ENCODE measurements at regions of chr1 and their contacts with region 1.

Region 1: DNA sequence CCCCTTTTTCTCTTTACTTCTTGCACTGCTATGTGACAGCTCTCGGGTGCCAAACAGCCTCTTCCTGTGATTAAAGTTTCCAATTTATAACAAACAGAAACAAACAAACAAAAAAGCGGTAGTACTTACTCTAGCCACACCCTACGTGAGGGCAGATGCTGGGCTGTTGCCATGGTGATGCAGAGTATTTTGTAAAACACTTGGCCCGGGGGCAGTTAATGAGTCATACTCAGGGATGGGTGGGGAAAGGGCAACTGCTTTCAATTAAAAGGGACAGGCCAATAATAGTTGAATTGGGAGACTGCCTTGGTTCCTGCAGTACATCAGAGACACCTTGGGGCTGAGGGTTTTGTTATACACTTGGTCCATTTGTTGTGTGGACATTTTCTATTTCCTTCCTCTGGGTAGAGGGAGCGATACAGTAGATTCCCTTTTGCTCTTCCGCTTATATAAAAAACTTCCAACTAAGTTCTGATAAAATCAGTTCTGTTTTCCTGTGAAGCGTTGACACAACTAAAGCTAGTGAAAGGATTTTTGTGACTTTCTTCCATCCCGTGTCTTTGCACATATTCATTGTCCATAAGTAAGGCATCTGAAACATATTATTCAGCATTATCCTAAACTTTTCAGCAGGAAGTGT is 36.5 kb upstream of the THEM4 start:
- DNase-seq: peak; percentile 100
- H3K4me3 Mint-ChIP-seq: peak overlapping the region; percentile 16
- H3K27ac Mint-ChIP-seq: peak overlapping the region; percentile 99
- H3K4me1 Mint-ChIP-seq: peaks cover 33% of the 10 kb centered on the region
- H3K27me3 Mint-ChIP-seq: no peaks in the 10 kb centered on the region
- CTCF ChIP-seq: no peak

Region 2: DNA sequence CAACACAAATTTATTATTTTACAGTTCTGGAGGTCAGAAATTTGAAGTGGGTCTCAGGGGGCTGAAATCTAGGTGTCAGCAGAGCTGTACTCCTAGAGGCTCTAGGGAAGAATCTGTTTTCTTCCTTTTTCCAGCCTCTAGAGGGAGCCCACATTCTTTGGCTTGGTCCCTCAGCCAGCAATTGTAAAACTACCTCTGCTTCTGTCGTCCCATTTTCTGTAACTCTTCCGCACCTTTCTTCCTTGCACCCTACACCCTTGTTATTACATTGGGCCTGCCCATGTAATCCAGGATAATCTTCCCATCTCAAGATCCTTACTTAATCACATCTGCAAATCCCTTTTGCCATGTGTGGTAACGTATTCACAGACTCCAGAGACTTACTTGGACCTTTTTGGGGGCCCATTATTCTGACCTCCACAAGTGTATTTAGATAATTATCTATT is 11.8 kb before region 1 on chr1:
- CTCF ChIA-PET with region 1: interaction called, 10 read pairs
- POLR2A ChIA-PET with region 1: interaction called, 31 read pairs
- intact Hi-C with region 1: no loop called
- DNase-seq: peak; percentile 82
- H3K4me3 Mint-ChIP-seq: no peak overlapping the region
- H3K27ac Mint-ChIP-seq: no peak overlapping the region
- H3K4me1 Mint-ChIP-seq: peaks cover 11% of the 10 kb centered on the region
- H3K27me3 Mint-ChIP-seq: no peaks in the 10 kb centered on the region
- CTCF ChIP-seq: peak; percentile 96

Region 3: GRCh38 chr1:151958959-151959358 is 13.1 kb after region 1 on chr1:
- CTCF ChIA-PET with region 1: interaction called, 5 read pairs
- POLR2A ChIA-PET with region 1: interaction called, 13 read pairs
- intact Hi-C with region 1: no loop called
- DNase-seq: peak; percentile 79
- H3K4me3 Mint-ChIP-seq: no peak overlapping the region
- H3K27ac Mint-ChIP-seq: no peak overlapping the region
- H3K4me1 Mint-ChIP-seq: no peaks in the 10 kb centered on the region
- H3K27me3 Mint-ChIP-seq: no peaks in the 10 kb centered on the region
- CTCF ChIP-seq: no peak

Region 4: DNA sequence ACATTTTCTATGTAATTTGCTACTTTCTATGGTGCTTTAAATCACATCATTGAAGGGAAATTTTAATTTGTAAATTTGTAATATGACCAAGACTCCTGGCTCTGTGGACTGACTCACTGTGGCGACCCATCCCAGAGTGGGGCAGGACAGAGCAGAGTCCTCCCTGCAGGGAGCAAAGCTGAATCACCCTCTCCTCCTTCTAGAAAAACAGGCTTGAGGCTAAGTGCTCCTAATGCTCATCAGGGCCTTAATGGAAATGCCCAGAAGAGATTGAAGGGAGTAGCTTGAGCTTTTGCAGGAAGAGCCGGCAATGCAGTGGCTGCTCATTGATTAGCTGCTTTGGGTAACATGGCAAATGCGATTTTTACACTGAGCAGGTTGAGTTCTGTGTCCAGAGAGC is 31.0 kb after region 1 on chr1:
- CTCF ChIA-PET with region 1: interaction called, 5 read pairs
- POLR2A ChIA-PET with region 1: interaction called, 87 read pairs
- intact Hi-C with region 1: no loop called
- DNase-seq: peak; percentile 82
- H3K4me3 Mint-ChIP-seq: no peak overlapping the region
- H3K27ac Mint-ChIP-seq: peak overlapping the region; percentile 62
- H3K4me1 Mint-ChIP-seq: peaks cover 71% of the 10 kb centered on the region
- H3K27me3 Mint-ChIP-seq: no peaks in the 10 kb centered on the region
- CTCF ChIP-seq: no peak

Region 5: DNA sequence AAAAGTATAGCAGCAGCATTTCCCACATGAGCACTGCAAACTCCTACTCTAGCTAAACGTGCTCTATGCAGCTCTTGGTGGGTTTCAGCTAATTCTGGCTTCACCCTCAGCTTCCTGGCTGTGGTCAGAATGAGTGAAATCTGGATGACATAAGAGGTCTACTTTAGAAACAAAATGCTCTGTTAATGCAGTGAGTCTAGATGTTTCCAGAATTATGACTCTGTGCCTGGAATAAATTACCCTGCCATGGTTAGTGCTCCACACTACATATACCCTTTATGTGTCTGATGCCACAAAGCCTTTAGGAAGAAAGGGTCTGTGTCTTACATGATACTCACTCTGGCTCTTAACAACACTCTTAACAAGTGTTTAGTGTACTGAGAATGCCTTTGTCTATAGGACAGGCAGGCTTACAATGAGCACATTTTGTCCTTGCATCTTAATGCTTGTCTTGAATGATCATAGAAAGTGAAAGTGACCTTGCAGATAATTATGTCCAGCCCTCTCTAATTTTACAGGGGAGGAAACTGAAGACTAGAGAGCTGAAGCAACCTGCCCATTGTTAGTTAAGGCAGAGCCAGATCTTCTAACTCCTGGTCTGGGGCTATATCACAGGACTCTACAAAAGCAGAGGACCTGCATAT is 38.6 kb after region 1 on chr1:
- CTCF ChIA-PET with region 1: interaction called, 5 read pairs
- POLR2A ChIA-PET with region 1: interaction called, 453 read pairs
- intact Hi-C with region 1: no loop called
- DNase-seq: no peak
- H3K4me3 Mint-ChIP-seq: no peak overlapping the region
- H3K27ac Mint-ChIP-seq: peak overlapping the region; percentile 51
- H3K4me1 Mint-ChIP-seq: peaks cover 72% of the 10 kb centered on the region
- H3K27me3 Mint-ChIP-seq: no peaks in the 10 kb centered on the region
- CTCF ChIP-seq: no peak